Heart right ventricle (tissue), 16 donors: ENCODE measurements at regions of chr11 and their contacts with region 1.

Region 1: GRCh38 chr11:118353084-118353710 is 6.2 kb upstream of the UBE4A start:
- DNase-seq: no peak
- ATAC-seq: no peak
- H3K4me3 ChIP-seq: no peak overlapping the region
- H3K27ac ChIP-seq: no peak overlapping the region
- H3K4me1 ChIP-seq: peaks cover 0 to 3% (median 0%) of the 10 kb centered on the region in 9 donors
- H3K27me3 ChIP-seq: peaks cover 0 to 21% (median 4%) of the 10 kb centered on the region in 7 donors
- CTCF ChIP-seq: peak in 8 of 9 donors; percentile 35 to 70 (median 62)

Region 2: DNA sequence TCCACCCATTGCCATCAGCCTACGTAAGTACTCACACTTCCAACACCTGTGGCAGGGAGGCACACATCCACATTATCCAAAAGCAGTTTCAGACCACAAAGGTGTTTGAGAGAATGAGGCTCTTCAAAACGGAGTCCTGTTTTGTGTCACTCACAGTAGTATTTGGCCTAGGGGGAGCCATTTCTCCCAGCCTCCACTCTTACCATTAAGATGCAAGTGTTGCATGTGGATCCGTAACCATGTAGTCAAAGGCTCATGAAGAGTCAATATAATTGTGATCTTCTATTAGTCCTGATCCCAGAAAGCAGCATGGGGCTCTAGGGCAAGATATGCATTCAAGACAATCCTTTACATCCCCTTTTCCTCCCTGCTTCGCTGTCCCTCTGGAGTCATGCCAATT is 325.5 kb before region 1 on chr11:
- intact Hi-C with region 1: no loop called
- DNase-seq: no peak
- ATAC-seq: no peak
- H3K4me3 ChIP-seq: no peak overlapping the region
- H3K27ac ChIP-seq: no peak overlapping the region
- H3K4me1 ChIP-seq: peaks cover 0 to 4% (median 0%) of the 10 kb centered on the region in 9 donors
- H3K27me3 ChIP-seq: peaks cover 0 to 10% (median 0%) of the 10 kb centered on the region in 7 donors
- CTCF ChIP-seq: no peak

Region 3: GRCh38 chr11:118227865-118228785 is 125.1 kb before region 1 on chr11:
- intact Hi-C with region 1: no loop called
- DNase-seq: no peak
- ATAC-seq: peak in 5 of 8 donors; percentile 11 to 60 (median 39)
- H3K4me3 ChIP-seq: no peak overlapping the region
- H3K27ac ChIP-seq: peak overlapping the region in 4 of 10 donors; percentile 32 to 85 (median 38)
- H3K4me1 ChIP-seq: peaks cover 0 to 59% (median 0%) of the 10 kb centered on the region in 9 donors
- H3K27me3 ChIP-seq: no peaks in the 10 kb centered on the region
- CTCF ChIP-seq: no peak

Region 4: GRCh38 chr11:118290923-118291322 is 62.3 kb before region 1 on chr11:
- intact Hi-C with region 1: loop called in 6 of 10 experiments (anchors 5 to 10 kb)
- DNase-seq: peak in 1 of 2 donors; percentile 22
- ATAC-seq: peak; percentile 55 to 83 (median 78)
- H3K4me3 ChIP-seq: peak overlapping the region in 1 of 10 donors; percentile 8
- H3K27ac ChIP-seq: no peak overlapping the region
- H3K4me1 ChIP-seq: no peaks in the 10 kb centered on the region
- H3K27me3 ChIP-seq: peaks cover 0 to 6% (median 0%) of the 10 kb centered on the region in 7 donors
- CTCF ChIP-seq: peak in 8 of 9 donors; percentile 11 to 64 (median 55)

Region 5: DNA sequence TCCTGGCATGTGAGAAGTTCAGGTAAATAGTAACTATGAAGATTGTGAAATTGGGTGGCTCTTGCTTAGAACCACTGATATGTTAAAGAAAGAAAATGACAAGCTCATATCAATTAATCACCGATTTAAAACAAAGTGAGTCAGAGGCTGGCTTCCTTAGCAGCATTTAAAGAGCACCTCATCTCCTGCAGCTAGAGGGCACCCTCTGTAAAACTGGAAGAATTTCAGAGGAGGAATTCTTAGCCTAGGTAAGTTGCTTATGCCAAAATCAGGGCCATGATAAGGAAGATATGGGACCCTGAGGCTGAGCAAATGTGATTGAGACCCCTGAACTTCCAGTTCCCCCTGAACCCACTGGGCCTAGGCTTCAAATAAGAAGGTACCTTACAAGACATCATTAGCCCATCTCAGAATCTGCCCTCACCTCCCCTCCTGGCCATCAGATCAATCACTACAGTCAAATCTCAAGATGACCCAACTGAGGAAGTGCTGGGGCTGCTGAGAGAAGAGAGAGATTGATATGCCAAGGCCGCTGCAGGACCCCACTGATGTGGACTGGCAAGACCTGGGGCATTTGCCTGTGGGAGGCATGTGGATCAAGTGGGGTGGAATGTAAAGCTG is 57.3 kb before region 1 on chr11:
- intact Hi-C with region 1: loop called in 8 of 10 experiments (anchors 5 to 10 kb)
- DNase-seq: no peak
- ATAC-seq: peak in 1 of 8 donors; percentile 29
- H3K4me3 ChIP-seq: no peak overlapping the region
- H3K27ac ChIP-seq: no peak overlapping the region
- H3K4me1 ChIP-seq: no peaks in the 10 kb centered on the region
- H3K27me3 ChIP-seq: peaks cover 0 to 6% (median 0%) of the 10 kb centered on the region in 7 donors
- CTCF ChIP-seq: peak in 8 of 9 donors; percentile 10 to 68 (median 59)

Region 6: DNA sequence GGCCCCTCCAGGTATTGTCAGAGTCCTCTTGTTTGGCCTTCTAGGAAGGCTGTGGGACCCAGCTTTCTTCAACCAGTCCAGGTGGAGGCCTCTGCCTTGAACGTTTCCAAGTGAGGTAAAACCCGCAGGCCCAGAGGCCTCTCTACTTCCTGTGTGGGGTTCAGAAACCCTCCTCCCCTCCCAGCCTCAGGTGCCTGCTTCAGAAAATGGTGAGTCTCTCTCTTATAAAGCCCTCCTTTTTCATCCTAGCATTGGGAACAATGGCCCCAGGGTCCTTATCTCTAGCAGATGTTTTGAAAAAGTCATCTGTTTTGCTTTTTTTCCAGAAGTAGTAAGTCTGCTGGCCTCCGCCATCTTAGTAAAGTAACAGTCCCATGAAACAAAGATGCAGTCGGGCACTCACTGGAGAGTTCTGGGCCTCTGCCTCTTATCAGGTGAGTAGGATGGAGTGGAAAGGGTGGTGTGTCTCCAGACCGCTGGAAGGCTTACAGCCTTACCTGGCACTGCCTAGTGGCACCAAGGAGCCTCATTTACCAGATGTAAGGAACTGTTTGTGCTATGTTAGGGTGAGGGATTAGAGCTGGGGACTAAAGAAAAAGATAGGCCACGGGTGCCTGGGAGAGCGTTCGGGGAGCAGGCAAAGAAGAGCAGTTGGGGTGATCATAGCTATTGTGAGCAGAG is 48.5 kb before region 1 on chr11 and contains the start of gene CD3E:
- intact Hi-C with region 1: loop called in 7 of 10 experiments (anchors 5 to 10 kb)
- DNase-seq: no peak
- ATAC-seq: no peak
- H3K4me3 ChIP-seq: peak within 1 kb of the TSS in 1 of 10 donors; percentile 47
- H3K27ac ChIP-seq: peak within 1 kb of the TSS in 1 of 10 donors; percentile 85
- H3K4me1 ChIP-seq: no peaks in the 10 kb centered on the region
- H3K27me3 ChIP-seq: peaks cover 0 to 25% (median 9%) of the 10 kb centered on the region in 7 donors
- CTCF ChIP-seq: no peak
- total RNA-seq, gene CD3E: 0.17 to 12.2 (median 0.59) TPM in 8 of 10 donors, not detected in the others

Region 7: DNA sequence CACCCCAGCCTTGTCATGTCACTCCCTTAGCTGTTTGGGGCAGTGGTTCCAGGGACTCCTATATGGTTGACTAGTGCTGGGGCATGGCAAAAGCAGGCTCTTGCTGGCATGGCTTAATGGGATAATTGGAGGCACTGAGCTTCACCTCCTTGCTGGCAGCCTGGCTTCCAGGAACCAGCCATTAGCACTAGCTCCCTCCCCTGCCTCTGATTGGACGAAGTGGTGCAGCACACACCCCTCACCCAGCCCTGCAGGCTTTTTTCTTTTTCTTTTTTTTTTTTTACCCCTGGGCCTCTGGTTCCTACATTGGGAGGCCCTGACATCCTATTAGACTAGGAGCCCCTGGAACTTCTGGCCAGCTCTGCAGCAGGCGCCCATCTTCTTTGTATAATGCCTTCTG is 272.8 kb after region 1 on chr11:
- intact Hi-C with region 1: no loop called
- DNase-seq: no peak
- ATAC-seq: no peak
- H3K4me3 ChIP-seq: no peak overlapping the region
- H3K27ac ChIP-seq: peak overlapping the region in 1 of 10 donors; percentile 44
- H3K4me1 ChIP-seq: peaks cover 44 to 99% (median 66%) of the 10 kb centered on the region in 9 donors
- H3K27me3 ChIP-seq: peaks cover 0 to 10% (median 0%) of the 10 kb centered on the region in 7 donors
- CTCF ChIP-seq: no peak

Region 8: DNA sequence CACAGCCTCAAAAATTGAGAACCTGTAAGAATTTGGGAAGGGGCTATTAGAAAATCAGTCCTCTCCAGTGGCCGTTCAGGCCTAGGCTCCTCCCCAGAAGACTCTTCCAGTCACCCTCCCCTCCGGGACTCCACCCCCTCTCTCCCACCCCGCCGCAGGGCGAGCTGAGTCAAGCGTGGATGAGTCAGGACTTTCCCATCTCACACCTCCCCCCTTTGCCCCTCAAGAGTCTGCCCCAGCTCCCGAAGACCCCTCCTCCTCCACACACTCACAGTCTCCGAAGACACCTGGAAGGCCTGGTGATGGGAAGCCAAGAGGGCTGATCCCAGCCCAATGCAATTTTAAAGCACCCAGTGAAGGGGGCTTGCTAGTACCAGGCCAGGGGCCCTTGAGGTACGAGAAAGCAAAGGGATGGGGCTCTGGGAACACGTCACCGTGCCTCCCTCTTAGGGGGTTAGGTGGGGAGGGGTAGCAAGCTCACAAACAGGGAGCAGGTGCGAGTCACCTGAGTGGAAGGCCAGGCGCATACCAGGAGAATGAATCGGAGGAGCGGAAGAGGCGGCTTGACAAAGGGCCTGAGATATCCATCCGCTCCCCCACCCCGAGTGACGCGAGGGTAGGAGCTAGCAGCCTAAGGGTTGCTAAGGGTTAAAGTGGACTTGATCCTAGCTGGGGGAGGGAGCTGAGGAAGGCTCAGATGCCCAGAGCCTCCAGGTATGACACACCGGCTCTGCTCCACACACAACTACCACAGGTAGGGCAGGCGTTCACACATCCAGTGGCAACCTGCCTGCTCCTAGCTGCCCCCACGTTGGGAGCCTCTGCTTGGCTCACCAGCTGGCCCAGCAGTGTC is 558.9 kb after region 1 on chr11:
- intact Hi-C with region 1: no loop called
- DNase-seq: peak; percentile 79 to 82
- ATAC-seq: peak; percentile 29 to 66 (median 46)
- H3K4me3 ChIP-seq: peak overlapping the region in 7 of 10 donors; percentile 37 to 55 (median 48)
- H3K27ac ChIP-seq: peak overlapping the region; percentile 83 to 98 (median 94)
- H3K4me1 ChIP-seq: peaks cover 81 to 100% (median 100%) of the 10 kb centered on the region in 9 donors
- H3K27me3 ChIP-seq: no peaks in the 10 kb centered on the region
- CTCF ChIP-seq: no peak